Kidney (tissue), 22 donors: ENCODE measurements at regions of chr13 and their contacts with region 1.

Region 1: GRCh38 chr13:45301243-45301642 is 39.7 kb downstream of the TPT1 start:
- DNase-seq: no peak
- H3K4me3 ChIP-seq: no peak overlapping the region
- H3K27ac ChIP-seq: no peak overlapping the region
- H3K4me1 ChIP-seq: no peaks in the 10 kb centered on the region
- H3K27me3 ChIP-seq: no peaks in the 10 kb centered on the region
- CTCF ChIP-seq: no peak

Region 2: DNA sequence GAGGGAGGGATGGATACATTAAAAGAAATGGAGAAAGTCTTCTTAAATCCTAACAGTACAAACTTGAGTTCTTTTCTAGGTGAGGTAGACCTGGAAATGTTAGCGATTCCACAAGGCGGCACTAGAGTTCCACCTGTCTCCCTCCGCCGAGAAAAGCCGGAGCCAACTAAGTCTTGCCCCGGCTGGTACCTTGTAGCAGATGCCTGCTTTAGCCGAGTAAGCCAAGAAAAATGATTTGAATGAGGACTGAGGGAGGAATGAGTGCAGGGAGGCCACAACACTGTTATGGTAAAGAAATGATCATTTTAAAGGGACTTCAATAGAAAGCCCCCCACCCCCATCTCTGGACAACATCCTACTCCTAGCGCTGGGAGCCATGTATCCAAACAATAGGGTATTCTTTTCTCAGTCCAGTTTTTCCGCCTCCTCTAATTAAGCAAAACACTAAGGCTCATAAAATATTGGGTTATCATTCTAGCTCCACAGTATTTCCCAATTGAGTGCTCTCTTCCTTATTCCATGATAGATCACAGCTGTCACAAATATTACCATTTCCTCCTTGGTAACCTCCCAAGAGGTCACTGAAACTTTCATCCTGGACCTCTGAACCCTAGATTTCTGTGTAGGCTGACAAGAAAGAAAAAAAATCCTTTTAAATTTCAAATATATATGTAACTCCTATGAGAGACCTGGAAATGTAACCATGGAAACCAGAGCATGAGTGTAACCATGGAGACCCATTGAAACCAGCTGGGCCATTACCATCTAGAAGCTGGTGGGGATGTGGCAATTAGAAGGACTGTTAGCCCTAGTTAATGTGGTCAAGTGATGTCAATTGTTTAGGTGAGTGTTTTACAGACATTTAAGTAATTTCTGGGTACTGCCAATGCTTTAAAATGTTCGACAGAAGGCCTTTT is 253.6 kb before region 1 on chr13:
- intact Hi-C with region 1: loop called (anchors 10 kb)
- DNase-seq: peak; percentile 73 to 92 (median 85)
- H3K4me3 ChIP-seq: peak overlapping the region; percentile 52 to 78 (median 60)
- H3K27ac ChIP-seq: no peak overlapping the region
- H3K4me1 ChIP-seq: no peaks in the 10 kb centered on the region
- H3K27me3 ChIP-seq: no peaks in the 10 kb centered on the region
- CTCF ChIP-seq: peak; percentile 91